Natural killer cell (primary cell): ENCODE measurements at regions of chr11 and their contacts with region 1.

Region 1: GRCh38 chr11:124837491-124837856 is 27.8 kb upstream of the ROBO3 start:
- DNase-seq: peak in 1 of 2 donors; percentile 41
- ATAC-seq: no peak
- H3K4me3 ChIP-seq: no peak overlapping the region
- H3K4me3 Mint-ChIP-seq: no peak overlapping the region
- H3K27ac ChIP-seq: no peak overlapping the region
- H3K27ac Mint-ChIP-seq: no peak overlapping the region
- H3K4me1 ChIP-seq: peaks cover 18% of the 10 kb centered on the region
- H3K4me1 Mint-ChIP-seq: peaks cover 6 to 9% of the 10 kb centered on the region in 2 donors
- H3K27me3 ChIP-seq: peaks cover 32% of the 10 kb centered on the region
- H3K27me3 Mint-ChIP-seq: peaks cover 51 to 62% of the 10 kb centered on the region in 2 donors
- CTCF ChIP-seq: no peak

Region 2: DNA sequence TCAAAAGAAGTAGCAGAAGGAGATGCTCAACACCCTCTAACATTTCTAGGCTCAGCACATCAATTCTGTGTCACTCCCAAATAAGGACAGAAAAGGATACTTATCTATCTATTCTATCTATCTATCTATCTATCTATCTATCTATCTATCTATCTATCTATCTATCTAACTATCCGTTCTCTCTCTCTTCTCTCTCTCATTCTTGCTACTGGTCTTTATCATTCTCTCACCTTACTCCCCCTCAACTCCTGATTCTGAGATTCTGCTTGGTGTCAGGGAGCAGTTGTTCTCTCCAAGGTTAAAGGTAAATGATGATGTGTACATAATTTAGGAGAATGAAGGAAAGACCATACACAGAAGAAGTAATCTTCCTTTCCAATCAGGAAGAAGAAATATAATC is 842.4 kb before region 1 on chr11 and contains the start of gene OR10G6:
- intact Hi-C with region 1: no loop called
- DNase-seq: no peak
- ATAC-seq: no peak
- H3K4me3 ChIP-seq: no peak within 1 kb of the TSS
- H3K4me3 Mint-ChIP-seq: no peak within 1 kb of the TSS
- H3K27ac ChIP-seq: no peak within 1 kb of the TSS
- H3K27ac Mint-ChIP-seq: no peak within 1 kb of the TSS
- H3K4me1 ChIP-seq: no peaks in the 10 kb centered on the region
- H3K4me1 Mint-ChIP-seq: no peaks in the 10 kb centered on the region
- H3K27me3 ChIP-seq: no peaks in the 10 kb centered on the region
- H3K27me3 Mint-ChIP-seq: peaks cover 0 to 3% of the 10 kb centered on the region in 2 donors
- CTCF ChIP-seq: no peak
- total RNA-seq, gene OR10G6: not detected

Region 3: DNA sequence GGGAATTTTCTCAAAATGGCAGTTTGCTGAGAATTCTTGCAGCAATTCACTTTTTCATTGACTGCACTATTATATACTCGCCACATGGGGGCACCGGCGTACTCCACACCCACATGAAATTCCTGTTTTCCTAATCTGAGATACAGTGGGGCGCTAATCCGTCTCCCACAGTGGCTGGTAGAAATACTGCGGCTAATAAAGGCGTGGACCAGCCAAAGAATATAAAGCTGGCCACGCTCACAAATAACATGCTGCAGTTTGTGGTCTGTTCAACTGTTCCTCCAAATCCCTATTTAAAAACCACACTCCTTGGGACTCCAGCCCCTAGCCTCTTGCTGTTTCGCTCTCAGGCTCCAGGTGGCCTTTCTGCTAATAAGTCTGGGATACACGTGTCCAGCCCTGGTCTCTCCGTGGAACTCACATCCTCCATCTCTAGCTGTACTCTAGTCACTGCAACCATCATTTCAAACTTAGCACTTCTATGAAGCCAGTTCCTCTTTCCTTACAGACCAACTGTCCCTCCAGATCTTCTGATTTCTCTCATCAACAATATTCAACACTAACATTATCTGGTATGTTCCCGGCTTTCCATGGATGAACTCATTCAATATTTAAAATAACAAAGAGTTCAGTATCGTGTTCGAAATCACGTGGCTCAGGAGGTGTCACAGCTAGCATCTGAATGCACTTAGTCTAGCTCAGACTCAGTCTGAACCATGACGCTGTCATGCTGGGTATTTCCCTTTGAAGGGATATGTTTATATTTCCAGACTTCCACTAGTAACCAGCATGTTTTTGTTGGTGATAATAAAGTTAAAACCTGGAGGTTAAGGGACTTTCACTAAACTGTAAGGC is 192.8 kb before region 1 on chr11:
- intact Hi-C with region 1: loop called (anchors 1 kb)
- DNase-seq: peak; percentile 20 to 69
- ATAC-seq: peak; percentile 66 to 82 (median 78)
- H3K4me3 ChIP-seq: no peak overlapping the region
- H3K4me3 Mint-ChIP-seq: no peak overlapping the region
- H3K27ac ChIP-seq: no peak overlapping the region
- H3K27ac Mint-ChIP-seq: no peak overlapping the region
- H3K4me1 ChIP-seq: no peaks in the 10 kb centered on the region
- H3K4me1 Mint-ChIP-seq: peaks cover 6% of the 10 kb centered on the region in 2 donors
- H3K27me3 ChIP-seq: no peaks in the 10 kb centered on the region
- H3K27me3 Mint-ChIP-seq: no peaks in the 10 kb centered on the region
- CTCF ChIP-seq: peak; percentile 80

Region 4: DNA sequence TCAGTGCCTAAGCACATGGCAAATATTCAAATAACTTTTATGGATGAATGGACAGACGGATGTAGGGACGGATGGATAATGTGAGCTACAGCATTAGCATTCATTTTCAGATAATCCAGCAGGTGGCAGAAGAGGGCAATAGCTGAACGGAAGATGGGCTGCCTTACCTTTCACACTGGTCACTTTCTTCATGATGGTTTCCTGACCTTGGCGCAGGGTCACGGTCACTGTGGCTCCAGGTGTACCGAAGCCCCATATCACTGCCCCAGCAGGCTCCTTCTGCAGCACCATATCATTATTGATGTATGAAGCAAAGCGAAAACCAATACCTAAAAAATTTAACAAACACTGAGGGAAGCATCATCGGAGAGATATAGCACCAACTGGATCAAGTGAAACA is 168.3 kb before region 1 on chr11:
- intact Hi-C with region 1: loop called (anchors 1 kb)
- DNase-seq: peak in 1 of 2 donors; percentile 81
- ATAC-seq: peak in 2 of 3 donors; percentile 29 to 33
- H3K4me3 ChIP-seq: no peak overlapping the region
- H3K4me3 Mint-ChIP-seq: no peak overlapping the region
- H3K27ac ChIP-seq: no peak overlapping the region
- H3K27ac Mint-ChIP-seq: no peak overlapping the region
- H3K4me1 ChIP-seq: peaks cover 18% of the 10 kb centered on the region
- H3K4me1 Mint-ChIP-seq: peaks cover 12 to 15% of the 10 kb centered on the region in 2 donors
- H3K27me3 ChIP-seq: no peaks in the 10 kb centered on the region
- H3K27me3 Mint-ChIP-seq: no peaks in the 10 kb centered on the region
- CTCF ChIP-seq: peak; percentile 93

Region 5: DNA sequence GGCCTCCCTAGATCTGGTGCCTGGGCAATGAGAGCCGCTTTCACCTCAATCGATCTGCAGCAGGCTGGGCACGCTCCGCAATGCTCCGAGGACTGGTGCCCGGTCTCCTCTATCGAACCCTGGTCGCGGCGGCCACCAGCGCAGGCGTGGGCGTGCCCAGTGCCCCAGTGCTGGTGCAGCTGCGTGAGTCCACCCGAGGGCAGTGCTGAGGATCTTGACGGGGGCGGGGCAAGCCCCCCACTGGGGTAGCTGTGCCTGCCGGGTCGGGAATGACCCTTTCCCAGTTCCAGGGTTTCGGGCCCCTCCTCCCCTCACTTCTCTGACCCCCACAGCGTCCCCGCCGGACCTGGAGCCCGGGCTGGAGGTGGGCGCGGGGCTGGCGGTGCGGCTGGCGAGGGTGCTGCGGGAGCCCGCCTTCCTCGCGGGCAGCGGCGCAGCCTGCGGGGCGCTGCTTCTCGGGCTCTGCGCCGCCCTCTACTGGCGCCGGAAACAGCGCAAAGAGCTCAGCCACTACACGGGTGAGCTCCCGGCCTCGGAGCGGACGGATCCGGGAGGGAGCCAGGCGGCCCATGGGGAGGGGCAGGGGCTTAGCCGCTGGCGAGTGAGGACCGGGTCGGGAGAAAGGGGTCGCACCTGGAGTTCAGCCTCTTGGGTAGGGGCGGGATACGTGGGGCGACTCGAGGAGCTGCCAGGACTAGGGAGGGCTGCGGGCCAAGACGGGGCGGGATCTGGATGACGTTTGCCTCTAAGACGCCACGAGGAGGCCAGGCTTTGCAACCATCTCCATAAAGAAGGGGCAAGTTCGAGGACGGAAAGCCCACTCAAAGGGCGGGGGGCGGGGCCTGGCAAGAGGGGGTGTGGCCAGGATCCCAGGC is 38.7 kb after region 1 on chr11:
- intact Hi-C with region 1: no loop called
- DNase-seq: peak; percentile 77 to 89
- ATAC-seq: peak; percentile 92
- H3K4me3 ChIP-seq: peak overlapping the region; percentile 74
- H3K4me3 Mint-ChIP-seq: peak overlapping the region; percentile 90
- H3K27ac ChIP-seq: peak overlapping the region; percentile 85
- H3K27ac Mint-ChIP-seq: peak overlapping the region; percentile 53 to 92
- H3K4me1 ChIP-seq: peaks cover 19% of the 10 kb centered on the region
- H3K4me1 Mint-ChIP-seq: peaks cover 16 to 54% of the 10 kb centered on the region in 2 donors
- H3K27me3 ChIP-seq: peaks cover 6% of the 10 kb centered on the region
- H3K27me3 Mint-ChIP-seq: peaks cover 27 to 30% of the 10 kb centered on the region in 2 donors
- CTCF ChIP-seq: peak; percentile 76